RWPE1 (cell line): ENCODE measurements at regions of chr1 and their contacts with region 1.

Region 1: GRCh38 chr1:201895913-201896807 is 7.5 kb downstream of the SHISA4 start:
- DNase-seq: peak; percentile 95
- H3K27ac ChIP-seq: no peak overlapping the region
- CTCF ChIP-seq: peak; percentile 93

Region 2: DNA sequence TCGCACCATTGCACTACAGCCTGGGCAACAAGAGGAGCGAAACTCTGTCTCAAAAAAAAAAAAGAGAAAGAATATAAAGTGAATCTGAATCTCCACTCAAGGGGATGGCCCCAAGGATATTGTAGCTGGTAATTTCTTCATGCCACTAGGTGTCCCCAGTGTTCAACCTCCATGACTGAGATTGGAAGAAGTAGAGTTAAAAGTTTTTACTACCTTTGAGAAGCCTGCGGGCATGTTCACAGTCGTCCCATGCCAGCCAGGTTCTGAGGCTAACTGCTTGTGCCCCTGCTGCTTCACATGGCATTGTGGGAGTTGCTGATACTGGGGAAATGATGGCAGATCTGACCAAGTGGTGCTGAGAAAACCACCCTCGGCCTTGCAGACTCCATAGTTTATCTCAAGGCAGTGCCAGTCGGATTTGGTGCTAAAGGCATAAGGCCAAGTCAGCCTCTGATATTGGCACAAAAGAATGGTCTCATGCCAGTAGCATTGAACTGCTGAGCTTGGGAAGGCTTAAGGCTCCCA is 18.2 kb before region 1 on chr1:
- CTCF ChIA-PET with region 1: interaction called, 52 read pairs
- POLR2A ChIA-PET with region 1: no interaction called
- DNase-seq: peak; percentile 75
- H3K27ac ChIP-seq: peak overlapping the region; percentile 53
- CTCF ChIP-seq: peak; percentile 73

Region 3: DNA sequence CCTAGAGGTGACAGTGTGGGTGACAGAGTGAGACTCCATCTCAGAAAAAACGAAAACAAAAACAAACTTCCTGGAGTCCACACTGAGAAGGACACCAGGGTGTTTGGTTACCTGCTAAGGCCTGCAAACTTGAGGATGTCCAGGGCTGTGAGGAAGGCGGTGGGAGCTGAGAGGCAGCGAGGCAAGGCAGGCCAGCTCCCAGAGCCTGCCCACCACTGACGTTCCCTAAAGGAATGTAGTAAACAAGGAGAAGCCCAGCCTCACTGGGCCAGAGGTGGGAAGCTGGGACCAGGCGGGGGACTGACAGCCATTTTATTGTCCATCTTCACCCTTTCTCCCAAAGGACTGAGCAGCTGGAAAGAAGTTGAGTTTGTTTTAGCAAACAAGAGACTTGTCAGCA is 16.7 kb after region 1 on chr1:
- CTCF ChIA-PET with region 1: interaction called, 18 read pairs
- POLR2A ChIA-PET with region 1: no interaction called
- DNase-seq: no peak
- H3K27ac ChIP-seq: no peak overlapping the region
- CTCF ChIP-seq: no peak

Region 4: DNA sequence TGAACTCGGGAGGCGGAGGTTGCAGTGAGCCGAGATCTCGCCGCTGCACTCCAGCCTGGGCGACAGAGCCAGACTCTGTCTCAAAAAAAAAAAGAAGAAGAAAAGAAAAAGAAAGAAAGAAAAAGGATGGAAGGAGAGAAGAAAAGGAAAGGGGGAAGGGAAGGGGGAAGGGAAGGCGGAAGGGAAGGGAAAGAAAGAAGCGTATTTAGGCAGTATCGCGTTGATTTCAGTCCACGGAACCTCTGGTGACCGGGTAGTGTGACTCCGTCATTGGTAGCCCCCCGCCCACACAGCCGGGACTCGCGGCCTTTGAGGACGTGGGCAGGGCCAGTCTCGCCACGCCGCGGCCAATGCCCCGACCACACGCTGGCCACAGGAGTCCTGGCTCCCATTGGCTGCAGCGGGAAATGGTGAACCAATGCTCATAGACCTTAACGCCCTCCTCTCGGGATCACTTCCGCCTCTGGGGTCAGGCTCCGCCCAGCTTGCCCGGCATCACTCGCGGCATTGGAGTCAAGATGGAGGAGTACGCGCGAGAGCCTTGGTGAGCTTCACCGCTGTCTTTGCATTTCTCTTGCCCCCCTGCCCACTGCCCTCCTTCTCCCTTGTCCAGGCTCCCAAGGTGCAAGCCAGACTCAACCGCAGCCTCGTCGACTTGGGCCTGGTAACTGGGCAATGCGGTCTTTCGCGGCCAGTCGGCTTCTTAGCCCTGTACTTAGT is 59.0 kb after region 1 on chr1 and contains the start of gene TIMM17A:
- CTCF ChIA-PET with region 1: interaction called, 21 read pairs
- POLR2A ChIA-PET with region 1: interaction called, 9 read pairs
- DNase-seq: peak; percentile 99
- H3K27ac ChIP-seq: peak within 1 kb of the TSS; percentile 71
- CTCF ChIP-seq: no peak

Region 5: GRCh38 chr1:201982623-201983379 is 86.6 kb after region 1 on chr1 and contains the start of gene RNPEP:
- CTCF ChIA-PET with region 1: interaction called, 29 read pairs
- POLR2A ChIA-PET with region 1: interaction called, 3 read pairs
- DNase-seq: peak; percentile 85
- H3K27ac ChIP-seq: peak within 1 kb of the TSS; percentile 92
- CTCF ChIP-seq: peak; percentile 34

Region 6: GRCh38 chr1:202112839-202113672 is 216.9 kb after region 1 on chr1:
- CTCF ChIA-PET with region 1: interaction called, 14 read pairs
- POLR2A ChIA-PET with region 1: no interaction called
- DNase-seq: no peak
- H3K27ac ChIP-seq: peak overlapping the region; percentile 72
- CTCF ChIP-seq: no peak

Region 7: GRCh38 chr1:202234350-202235002 is 338.3 kb after region 1 on chr1:
- CTCF ChIA-PET with region 1: no interaction called
- POLR2A ChIA-PET with region 1: no interaction called
- DNase-seq: no peak
- H3K27ac ChIP-seq: 0 out of 2 replicates have a peak overlapping the region, but pooled peaks have one; percentile 92
- CTCF ChIP-seq: no peak